Panc1 (cell line): ENCODE measurements at regions of chr11 and their contacts with region 1.

Region 1: GRCh38 chr11:32210556-32210955 is 119.7 kb downstream of the RCN1 start:
- DNase-seq: no peak
- ATAC-seq: peak; percentile 53; the same call in 1 of the 2 replicates
- H3K4me3 ChIP-seq: no peak overlapping the region
- H3K27ac ChIP-seq: no peak overlapping the region
- H3K4me1 ChIP-seq: no peaks in the 10 kb centered on the region
- H3K27me3 ChIP-seq: peaks cover 3% of the 10 kb centered on the region; the same call in 1 of the 2 replicates
- CTCF ChIP-seq: no peak

Region 2: DNA sequence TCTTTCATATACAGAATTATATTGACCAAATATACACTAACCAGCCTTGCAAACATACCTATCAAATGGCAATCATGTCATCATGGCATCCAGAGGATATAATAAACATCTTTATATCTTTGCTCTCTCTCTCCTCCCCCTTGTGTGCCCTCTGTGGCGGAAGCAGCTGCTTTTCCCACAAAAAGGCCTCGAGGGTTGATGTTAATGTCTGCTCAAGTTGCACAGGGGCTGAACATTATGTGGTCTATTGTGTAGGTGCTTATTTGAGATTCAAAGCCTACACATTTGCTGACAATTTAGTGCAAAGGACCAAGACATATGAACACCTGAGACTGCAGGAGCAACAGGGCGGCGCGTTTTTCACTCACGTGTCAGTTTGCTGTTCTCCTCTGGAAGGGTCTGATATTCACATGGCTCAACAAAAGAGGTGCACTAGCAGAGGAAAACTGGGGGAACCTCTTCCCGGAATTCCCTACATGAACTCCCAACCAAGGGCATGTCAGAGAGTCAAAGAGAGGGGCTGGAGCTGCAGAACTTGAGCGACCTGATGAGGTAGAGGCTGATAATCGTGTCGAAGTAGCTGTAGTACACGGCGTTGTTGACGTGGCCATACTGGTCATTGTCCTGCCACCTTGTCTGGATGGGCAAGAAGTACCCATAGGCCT is 19.2 kb after region 1 on chr11:
- CTCF ChIA-PET with region 1: interaction called, 12 read pairs
- POLR2A ChIA-PET with region 1: no interaction called
- in situ Hi-C with region 1: no loop called
- intact Hi-C with region 1: no loop called
- DNase-seq: no peak
- ATAC-seq: no peak
- H3K4me3 ChIP-seq: no peak overlapping the region
- H3K27ac ChIP-seq: no peak overlapping the region
- H3K4me1 ChIP-seq: no peaks in the 10 kb centered on the region
- H3K27me3 ChIP-seq: no peaks in the 10 kb centered on the region; the same call in 1 of the 2 replicates
- CTCF ChIP-seq: no peak